ENCODE measurements at regions of chr3 and their contacts with region 1.

Region 1: GRCh38 chr3:33883538-33883950 is 85.1 kb downstream of the PDCD6IP start:
- DNase-seq: peak; percentile 67
- H3K4me3 Mint-ChIP-seq: no peak overlapping the region
- H3K27ac Mint-ChIP-seq: no peak overlapping the region
- H3K4me1 Mint-ChIP-seq: peaks cover 9% of the 10 kb centered on the region
- H3K27me3 Mint-ChIP-seq: peaks cover 21% of the 10 kb centered on the region
- CTCF ChIP-seq: peak; percentile 70

Region 2: GRCh38 chr3:33823821-33824220 is 59.7 kb before region 1 on chr3:
- CTCF ChIA-PET with region 1: interaction called, 11 read pairs
- POLR2A ChIA-PET with region 1: no interaction called
- intact Hi-C with region 1: no loop called
- DNase-seq: no peak
- H3K4me3 Mint-ChIP-seq: no peak overlapping the region
- H3K27ac Mint-ChIP-seq: no peak overlapping the region
- H3K4me1 Mint-ChIP-seq: peaks cover 5% of the 10 kb centered on the region
- H3K27me3 Mint-ChIP-seq: no peaks in the 10 kb centered on the region
- CTCF ChIP-seq: no peak

Region 3: DNA sequence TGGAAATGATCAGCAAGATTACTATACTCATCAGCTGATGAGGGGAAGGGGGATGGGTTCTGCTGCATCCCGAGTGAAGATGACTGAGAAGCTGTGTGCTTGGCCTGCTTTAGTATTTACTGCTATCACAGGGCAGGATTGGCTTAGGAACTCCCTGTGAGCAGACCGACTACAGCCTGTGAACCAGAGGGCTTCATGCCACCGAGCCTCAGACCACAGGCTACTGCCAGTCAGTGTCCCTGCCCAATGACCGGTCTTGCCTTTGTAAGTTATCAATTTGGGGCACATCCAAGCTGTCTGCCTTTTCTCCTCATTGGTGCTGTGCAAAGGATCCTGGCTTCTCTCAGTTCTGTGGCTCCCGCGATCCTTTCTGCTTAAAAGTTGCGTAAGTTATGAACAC is 13.6 kb before region 1 on chr3:
- CTCF ChIA-PET with region 1: interaction called, 47 read pairs
- POLR2A ChIA-PET with region 1: interaction called, 3 read pairs
- intact Hi-C with region 1: no loop called
- DNase-seq: no peak
- H3K4me3 Mint-ChIP-seq: no peak overlapping the region
- H3K27ac Mint-ChIP-seq: no peak overlapping the region
- H3K4me1 Mint-ChIP-seq: no peaks in the 10 kb centered on the region
- H3K27me3 Mint-ChIP-seq: no peaks in the 10 kb centered on the region
- CTCF ChIP-seq: no peak

Region 4: GRCh38 chr3:33915791-33916546 is 32.4 kb after region 1 on chr3:
- CTCF ChIA-PET with region 1: interaction called, 23 read pairs
- POLR2A ChIA-PET with region 1: no interaction called
- intact Hi-C with region 1: no loop called
- DNase-seq: peak; percentile 36
- H3K4me3 Mint-ChIP-seq: no peak overlapping the region
- H3K27ac Mint-ChIP-seq: no peak overlapping the region
- H3K4me1 Mint-ChIP-seq: peaks cover 14% of the 10 kb centered on the region
- H3K27me3 Mint-ChIP-seq: no peaks in the 10 kb centered on the region
- CTCF ChIP-seq: no peak

Region 5: DNA sequence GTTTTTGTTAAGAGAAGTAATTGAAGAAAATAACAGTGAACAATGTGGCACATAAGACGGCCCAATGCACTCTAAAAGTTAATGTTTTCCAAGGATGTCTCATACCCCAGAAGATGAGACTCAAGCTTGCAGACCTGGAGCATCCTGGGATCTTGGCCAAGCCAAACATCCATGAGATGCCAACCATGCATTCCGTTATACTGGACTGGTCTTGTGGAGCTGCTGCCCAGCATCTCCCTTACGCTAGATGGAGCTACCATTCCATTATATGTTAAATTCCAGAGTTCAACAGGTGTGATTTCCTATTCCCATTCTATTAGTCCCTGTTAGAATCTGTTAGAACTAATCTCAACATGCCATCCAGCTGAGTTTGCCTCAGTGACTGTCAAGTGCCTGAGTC is 96.7 kb after region 1 on chr3:
- CTCF ChIA-PET with region 1: interaction called, 9 read pairs
- POLR2A ChIA-PET with region 1: no interaction called
- intact Hi-C with region 1: loop called (anchors 1 kb)
- DNase-seq: peak; percentile 82
- H3K4me3 Mint-ChIP-seq: no peak overlapping the region
- H3K27ac Mint-ChIP-seq: no peak overlapping the region
- H3K4me1 Mint-ChIP-seq: no peaks in the 10 kb centered on the region
- H3K27me3 Mint-ChIP-seq: peaks cover 40% of the 10 kb centered on the region
- CTCF ChIP-seq: peak; percentile 60

Region 6: DNA sequence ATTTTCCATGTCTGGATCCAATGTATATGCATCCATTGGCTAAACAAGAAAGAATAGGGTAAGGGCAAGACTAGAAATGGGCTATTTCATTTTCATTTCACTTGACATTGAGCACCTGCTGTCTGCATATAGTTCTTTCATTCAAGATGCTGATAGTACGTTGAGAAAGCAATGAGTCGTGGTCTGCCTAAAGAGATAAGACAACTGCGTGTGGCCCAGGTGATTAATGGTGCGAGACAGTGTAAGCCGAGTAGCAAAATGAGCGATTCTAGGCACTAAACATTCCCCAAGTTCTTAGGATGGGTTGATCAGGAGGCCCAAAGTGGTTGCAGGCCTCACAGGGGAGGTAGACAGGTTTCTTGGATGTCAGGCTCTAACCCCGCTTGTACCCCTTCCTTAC is 150.3 kb after region 1 on chr3:
- CTCF ChIA-PET with region 1: no interaction called
- POLR2A ChIA-PET with region 1: no interaction called
- intact Hi-C with region 1: no loop called
- DNase-seq: no peak
- H3K4me3 Mint-ChIP-seq: no peak overlapping the region
- H3K27ac Mint-ChIP-seq: no peak overlapping the region
- H3K4me1 Mint-ChIP-seq: no peaks in the 10 kb centered on the region
- H3K27me3 Mint-ChIP-seq: no peaks in the 10 kb centered on the region
- CTCF ChIP-seq: no peak

Region 7: GRCh38 chr3:34683851-34684250 is 800.3 kb after region 1 on chr3:
- CTCF ChIA-PET with region 1: interaction called, 253 read pairs
- POLR2A ChIA-PET with region 1: interaction called, 10 read pairs
- intact Hi-C with region 1: loop called (anchors 1 kb)
- DNase-seq: peak; percentile 70
- H3K4me3 Mint-ChIP-seq: no peak overlapping the region
- H3K27ac Mint-ChIP-seq: no peak overlapping the region
- H3K4me1 Mint-ChIP-seq: no peaks in the 10 kb centered on the region
- H3K27me3 Mint-ChIP-seq: no peaks in the 10 kb centered on the region
- CTCF ChIP-seq: peak; percentile 61

Measured in MCF 10A (cell line).